Right ventricle myocardium inferior (tissue), 1 donor: ENCODE measurements at regions of chr7 and their contacts with region 1.

Region 1: GRCh38 chr7:157397731-157398691 is 61.2 kb downstream of the DNAJB6 start:
- DNase-seq: no peak
- ATAC-seq: peak; percentile 73

Region 2: GRCh38 chr7:157250605-157251228 is 147.3 kb before region 1 on chr7:
- intact Hi-C with region 1: loop called (anchors 10 kb)
- DNase-seq: no peak
- ATAC-seq: no peak

Region 3: GRCh38 chr7:157357129-157358040 is 40.6 kb before region 1 on chr7:
- intact Hi-C with region 1: loop called (anchors 5 kb)
- DNase-seq: no peak
- ATAC-seq: no peak